ENCODE measurements at regions of chr20 and their contacts with region 1.

Region 1: DNA sequence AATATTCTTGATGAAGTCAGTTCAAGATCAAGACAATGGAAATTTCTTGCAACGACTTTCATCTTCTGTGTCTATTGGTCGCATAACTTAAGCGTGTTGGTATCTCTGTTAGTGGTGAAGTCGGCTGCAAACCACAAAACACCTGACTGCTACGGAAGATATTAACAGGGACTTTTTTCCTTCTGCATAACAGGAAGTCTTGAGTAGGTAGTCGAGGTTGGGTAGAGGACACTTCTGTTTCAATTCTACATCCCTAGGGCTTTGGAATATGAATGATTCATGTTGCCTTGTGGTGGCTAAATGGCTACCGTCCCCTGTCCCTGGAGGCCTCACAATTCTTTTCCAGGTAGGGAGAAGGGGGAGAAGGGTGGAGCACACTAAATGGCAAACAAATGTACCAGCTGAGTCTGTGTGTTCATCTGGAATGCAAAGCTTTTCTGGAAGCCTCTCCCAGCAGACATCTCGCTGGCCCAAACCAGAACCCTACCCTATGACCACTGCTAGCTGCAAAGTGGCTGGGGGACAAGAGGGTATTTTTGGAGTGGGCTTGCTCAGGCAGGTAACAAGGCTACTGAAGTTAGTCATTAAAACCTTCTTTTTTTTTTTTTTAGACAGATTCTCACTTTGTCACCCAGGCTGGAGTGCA is 34.6 kb upstream of the NKX2-2 start:
- DNase-seq: peak; percentile 61
- H3K4me3 Mint-ChIP-seq: peak overlapping the region; percentile 47
- H3K27ac Mint-ChIP-seq: peak overlapping the region; percentile 81
- H3K4me1 Mint-ChIP-seq: peaks cover 38% of the 10 kb centered on the region
- H3K27me3 Mint-ChIP-seq: peaks cover 4% of the 10 kb centered on the region

Region 2: DNA sequence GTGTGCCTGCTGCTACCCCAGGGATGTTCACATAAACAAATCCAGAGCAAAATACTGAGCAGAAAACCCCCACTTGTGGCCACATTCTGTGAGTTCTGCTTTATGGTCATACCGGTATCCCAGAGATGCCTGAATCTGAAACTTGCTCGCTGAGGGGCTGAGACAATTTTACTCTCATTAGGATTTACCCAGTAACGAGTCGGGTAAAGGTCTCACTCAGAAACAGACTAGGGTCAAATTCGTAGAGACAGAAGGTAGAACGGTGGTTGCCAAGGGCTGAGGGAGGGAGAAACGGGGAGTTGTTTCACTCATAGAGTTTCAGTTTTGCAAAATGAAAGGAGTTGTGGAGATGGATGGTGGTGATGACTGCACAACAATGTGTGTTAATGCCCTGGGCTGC is 10.8 kb after region 1 on chr20:
- intact Hi-C with region 1: loop called (anchors 1 kb)
- DNase-seq: peak; percentile 24
- H3K4me3 Mint-ChIP-seq: peak overlapping the region; percentile 71
- H3K27ac Mint-ChIP-seq: peak overlapping the region; percentile 59
- H3K4me1 Mint-ChIP-seq: peaks cover 44% of the 10 kb centered on the region
- H3K27me3 Mint-ChIP-seq: peaks cover 5% of the 10 kb centered on the region